ENCODE measurements at regions of chr19 and their contacts with region 1.

Region 1: GRCh38 chr19:38402967-38403861 is at the start of gene FAM98C:
- DNase-seq: peak; percentile 93 to 94
- ATAC-seq: peak; percentile 93 to 95
- H3K4me3 ChIP-seq: peak within 1 kb of the TSS; percentile 68 to 94 (median 72)
- H3K27ac ChIP-seq: peak within 1 kb of the TSS; percentile 65 to 76 (median 70)
- H3K4me1 ChIP-seq: peaks cover 0 to 9% of the 10 kb centered on the region in 2 donors
- H3K27me3 ChIP-seq: peaks cover 11 to 19% (median 13%) of the 10 kb centered on the region in 3 donors
- CTCF ChIP-seq: peak; percentile 97 to 100 (median 99)
- POLR2A ChIP-seq: peak; percentile 1 to 11
- total RNA-seq, gene FAM98C: 1.9 to 17.4 (median 3.3) TPM

Region 2: GRCh38 chr19:38452428-38453366 is 49.5 kb after region 1 on chr19:
- in situ Hi-C with region 1: no loop called
- intact Hi-C with region 1: loop called (anchors 10 kb)
- DNase-seq: peak; percentile 64 to 87
- ATAC-seq: peak; percentile 44 to 52
- H3K4me3 ChIP-seq: no peak overlapping the region
- H3K27ac ChIP-seq: peak overlapping the region; percentile 65 to 83 (median 77)
- H3K4me1 ChIP-seq: peaks cover 4% of the 10 kb centered on the region in 2 donors
- H3K27me3 ChIP-seq: no peaks in the 10 kb centered on the region
- CTCF ChIP-seq: no peak
- POLR2A ChIP-seq: no peak

Region 3: DNA sequence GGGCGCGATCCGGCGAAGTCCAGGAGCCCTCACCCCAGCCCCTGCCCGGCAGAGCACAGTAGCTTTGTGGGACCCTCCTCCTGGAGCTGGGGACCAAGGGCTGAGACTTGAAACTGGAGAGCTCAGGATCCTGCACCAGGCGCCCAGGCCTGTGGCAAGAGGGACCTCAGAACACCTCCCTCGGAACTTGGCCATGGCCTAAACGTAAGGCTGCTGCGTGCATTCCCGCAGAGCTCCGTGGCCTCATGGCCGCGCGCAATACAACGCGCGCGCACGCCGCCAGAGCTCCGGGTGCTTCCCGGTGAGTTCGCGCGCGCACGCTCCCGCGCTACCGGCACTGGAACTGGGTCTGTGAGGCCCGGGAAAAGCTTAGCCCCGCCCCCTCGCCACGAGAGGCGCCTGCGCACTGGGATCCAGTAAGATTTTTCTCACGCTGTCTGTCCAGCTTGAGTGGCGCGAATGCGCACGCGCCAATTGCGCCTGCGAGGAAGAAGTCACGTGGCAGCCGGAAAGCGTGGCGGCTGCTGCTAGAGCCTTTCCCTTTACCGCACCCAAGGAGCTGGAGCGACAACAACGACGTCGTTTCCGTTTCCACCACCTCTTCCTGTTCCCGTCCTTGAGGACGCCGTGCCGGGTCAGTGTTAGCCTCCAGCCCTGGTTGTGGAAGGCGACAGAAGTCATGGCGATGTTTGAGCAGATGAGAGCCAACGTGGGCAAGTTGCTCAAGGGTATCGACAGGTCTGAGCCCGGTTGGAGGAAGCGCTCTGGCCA is 215.6 kb after region 1 on chr19 and contains the start of gene EIF3K:
- in situ Hi-C with region 1: no loop called
- intact Hi-C with region 1: loop called (anchors 5 kb)
- DNase-seq: peak; percentile 97 to 99
- ATAC-seq: peak; percentile 94 to 97
- H3K4me3 ChIP-seq: peak within 1 kb of the TSS; percentile 80 to 95 (median 92)
- H3K27ac ChIP-seq: peak within 1 kb of the TSS; percentile 90 to 96 (median 94)
- H3K4me1 ChIP-seq: peaks cover 18% of the 10 kb centered on the region in 2 donors
- H3K27me3 ChIP-seq: no peaks in the 10 kb centered on the region
- CTCF ChIP-seq: no peak
- POLR2A ChIP-seq: peak; percentile 85 to 89
- total RNA-seq, gene EIF3K: 619 to 975 (median 681) TPM

Region 4: DNA sequence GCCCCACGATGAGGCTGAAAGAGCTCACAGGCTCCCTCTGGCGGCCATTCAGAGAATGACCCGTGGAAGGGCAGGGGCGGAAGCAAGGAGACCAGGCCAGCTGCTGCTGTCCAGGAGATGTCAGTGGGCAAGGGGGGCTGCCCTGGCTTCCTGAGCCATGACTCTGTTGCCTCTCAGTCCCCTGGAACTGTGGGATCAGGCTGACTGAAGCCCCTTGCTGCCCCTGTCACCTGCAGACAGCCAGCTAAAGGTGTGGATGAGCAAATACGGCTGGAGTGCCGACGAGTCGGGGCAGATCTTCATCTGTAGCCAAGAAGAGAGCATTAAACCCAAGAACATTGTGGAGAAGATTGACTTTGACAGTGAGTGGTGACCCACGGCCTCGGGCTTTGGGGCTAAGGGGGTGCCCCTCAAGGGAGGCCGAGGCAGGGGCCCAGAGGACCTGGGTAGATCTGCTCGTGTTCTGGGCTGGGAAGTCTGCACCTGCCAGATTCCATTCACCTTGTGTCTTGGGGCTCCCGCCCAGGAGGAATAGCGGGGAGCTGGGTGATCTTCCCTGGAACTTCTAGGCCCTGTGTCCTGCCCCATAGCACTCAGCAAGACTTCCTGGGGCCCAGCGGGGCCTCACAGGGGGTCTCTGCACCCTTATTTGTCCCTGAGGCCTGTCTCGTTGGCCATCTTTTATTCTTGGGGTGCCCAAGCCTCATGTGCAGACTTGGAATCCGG is 231.7 kb after region 1 on chr19:
- in situ Hi-C with region 1: loop called in 2 of 4 experiments (anchors 10 kb)
- intact Hi-C with region 1: loop called (anchors 1 kb)
- DNase-seq: no peak
- ATAC-seq: peak; percentile 43 to 66
- H3K4me3 ChIP-seq: no peak overlapping the region
- H3K27ac ChIP-seq: peak overlapping the region; percentile 4 to 64 (median 47)
- H3K4me1 ChIP-seq: peaks cover 0 to 11% of the 10 kb centered on the region in 2 donors
- H3K27me3 ChIP-seq: no peaks in the 10 kb centered on the region
- CTCF ChIP-seq: peak; percentile 77 to 94 (median 92)
- POLR2A ChIP-seq: no peak

Region 5: DNA sequence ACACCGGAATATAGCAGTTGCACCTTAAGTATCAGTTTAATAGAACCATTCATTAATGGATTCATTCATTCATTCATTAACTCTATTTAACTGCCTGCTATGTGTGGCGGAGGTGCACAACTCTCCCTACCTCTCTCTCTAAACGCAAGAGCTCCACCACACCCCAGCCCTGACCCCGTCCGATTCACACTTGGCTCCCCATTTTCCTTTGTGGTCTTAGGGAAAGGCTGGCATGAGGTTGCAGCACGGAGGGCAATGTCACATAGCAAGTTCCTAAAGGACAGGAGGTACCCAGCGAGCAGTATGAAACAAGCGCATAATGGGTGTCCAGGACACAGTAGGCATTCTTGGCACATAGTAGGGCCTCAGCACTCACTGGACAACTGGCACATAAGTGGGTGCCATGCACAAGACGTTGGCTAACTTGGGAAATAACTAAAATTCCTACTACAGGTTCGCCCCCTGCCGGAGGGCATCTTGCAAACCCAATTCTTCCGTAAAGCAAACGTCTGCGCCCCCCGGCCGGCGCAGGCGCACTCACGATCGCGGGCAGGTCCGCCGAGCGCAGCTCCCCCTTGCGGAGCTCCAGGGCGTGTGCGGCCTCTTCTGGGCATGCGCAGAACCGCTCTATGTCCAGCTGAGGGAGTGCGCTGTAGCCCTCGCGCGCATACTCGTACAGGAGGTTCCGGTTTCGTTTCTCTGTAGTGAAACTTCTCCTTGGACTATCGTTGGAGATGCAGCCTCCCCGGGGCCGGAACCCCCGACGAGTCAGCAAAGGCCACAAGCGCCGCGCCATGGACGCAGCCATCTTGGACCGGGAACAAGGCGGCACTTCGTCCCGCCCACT is 526.9 kb after region 1 on chr19 and contains the start of gene SARS2:
- in situ Hi-C with region 1: loop called in 1 of 4 experiments (anchors 10 kb)
- intact Hi-C with region 1: loop called (anchors 5 kb)
- DNase-seq: peak; percentile 84 to 86
- ATAC-seq: peak; percentile 87 to 91
- H3K4me3 ChIP-seq: peak within 1 kb of the TSS; percentile 64 to 86 (median 76)
- H3K27ac ChIP-seq: peak within 1 kb of the TSS; percentile 81 to 94 (median 88)
- H3K4me1 ChIP-seq: peaks cover 14 to 17% of the 10 kb centered on the region in 2 donors
- H3K27me3 ChIP-seq: no peaks in the 10 kb centered on the region
- CTCF ChIP-seq: peak; percentile 97 to 100 (median 98)
- POLR2A ChIP-seq: no peak
- total RNA-seq, gene SARS2: 12.1 to 30.0 (median 27.8) TPM

Measured in gastrocnemius medialis (tissue), 4 donors.